Motor neuron (in vitro differentiated cells): ENCODE measurements at regions of chr7 and their contacts with region 1.

Region 1: DNA sequence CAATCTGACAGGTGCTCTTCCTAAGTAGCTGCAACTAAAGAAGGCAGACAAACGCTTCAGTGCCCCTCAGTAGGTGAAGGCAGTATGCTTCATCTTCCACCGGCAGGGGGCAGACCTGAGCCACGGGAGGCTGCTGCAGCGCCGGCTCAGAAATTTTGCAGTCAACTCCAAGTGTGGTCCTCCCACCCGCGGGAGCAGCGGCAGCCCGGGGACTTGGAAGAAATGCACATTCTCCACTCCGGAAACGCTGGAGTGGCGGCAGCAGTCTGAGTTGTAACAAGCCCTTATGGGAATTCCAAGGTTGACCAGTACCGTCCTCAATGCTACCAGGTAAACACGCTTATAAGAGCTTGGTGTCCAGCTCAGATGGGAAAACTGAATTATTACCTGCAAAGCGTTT is 3.4 kb downstream of the IGFBP3 start:
- ATAC-seq: peak in 4 of 8 experiments; percentile 13 to 72 (median 40)
- H3K4me3 ChIP-seq: no peak overlapping the region
- H3K27ac ChIP-seq: no peak overlapping the region
- H3K4me1 ChIP-seq: no peaks in the 10 kb centered on the region

Region 2: DNA sequence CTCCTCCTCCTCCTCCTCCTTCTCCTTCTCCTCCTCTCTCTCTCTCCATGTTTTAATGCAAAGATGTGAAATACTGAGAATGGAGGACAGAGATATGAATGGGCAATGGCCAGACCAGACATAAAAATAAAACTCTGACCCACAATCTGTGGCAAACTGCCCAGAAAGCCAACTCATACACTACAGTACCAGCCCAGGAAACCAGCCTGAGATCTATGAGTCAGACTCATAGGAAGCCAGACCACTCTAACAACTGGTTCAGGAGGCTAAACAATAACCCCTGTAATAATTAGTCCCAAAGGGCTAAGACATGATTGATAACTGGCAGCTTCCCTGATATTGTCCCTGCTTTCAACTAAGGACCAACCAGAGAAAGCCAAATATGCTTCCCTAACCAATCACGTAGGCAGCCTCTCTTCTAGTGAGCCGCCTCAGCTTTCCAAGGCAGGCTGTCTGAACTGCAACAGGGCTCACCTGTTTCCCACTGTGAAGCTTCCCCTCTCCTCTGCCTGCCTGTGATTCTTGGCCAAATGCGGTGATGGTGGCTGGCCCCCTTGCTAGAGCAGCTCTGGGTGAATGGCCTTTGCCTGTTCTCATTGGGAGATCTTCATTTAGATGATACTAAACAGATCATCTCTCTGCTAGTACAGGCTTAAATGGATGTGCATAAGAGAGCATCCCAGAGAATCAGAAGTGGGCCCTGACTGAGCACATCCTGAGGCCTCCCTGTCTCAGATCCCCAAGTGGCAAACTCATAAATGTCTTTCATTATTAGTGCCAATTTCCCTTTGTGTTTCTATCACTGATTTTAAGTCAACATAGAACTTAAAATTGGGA is 846.7 kb after region 1 on chr7:
- in situ Hi-C with region 1: loop called in 1 of 9 experiments (anchors 25 kb)
- ATAC-seq: peak in 7 of 8 experiments; percentile 46 to 93 (median 66)
- H3K4me3 ChIP-seq: no peak overlapping the region
- H3K27ac ChIP-seq: no peak overlapping the region
- H3K4me1 ChIP-seq: no peaks in the 10 kb centered on the region

Region 3: DNA sequence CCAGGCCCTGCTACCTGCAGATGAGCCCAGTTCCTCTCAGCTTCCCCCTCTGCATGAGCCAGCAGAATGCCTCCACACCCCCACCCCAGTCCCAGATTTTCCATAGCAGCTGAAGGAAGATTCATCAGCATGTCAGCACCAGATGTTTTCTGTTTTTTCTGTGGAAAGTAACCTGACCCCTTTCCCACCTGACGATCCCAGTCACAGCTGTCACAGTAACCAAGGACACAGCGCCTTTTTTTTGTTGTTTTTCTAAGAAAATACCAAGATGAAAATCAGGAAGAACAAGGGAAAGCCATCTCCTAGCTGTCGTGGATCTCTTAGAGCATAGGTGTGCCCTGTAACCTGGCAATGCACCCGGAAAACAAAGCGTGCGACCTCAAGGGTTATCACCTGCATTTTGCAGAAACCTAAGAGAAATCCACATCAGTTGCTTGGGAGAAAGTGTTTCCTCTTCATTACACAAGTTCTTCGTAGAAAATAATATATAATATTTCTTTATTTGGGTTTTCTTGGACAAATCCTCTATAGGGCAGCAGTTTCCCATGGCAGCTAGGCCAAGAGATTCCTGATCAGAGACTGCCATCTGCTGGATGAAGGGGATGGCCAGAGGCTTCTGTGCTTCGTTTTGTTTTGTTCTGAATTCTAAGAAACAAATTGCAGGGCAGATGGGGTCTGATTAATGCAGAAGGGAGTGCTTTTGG is 1262.3 kb after region 1 on chr7:
- in situ Hi-C with region 1: loop called in 5 of 9 experiments (anchors 25 kb)
- ATAC-seq: peak; percentile 78 to 95 (median 86)
- H3K4me3 ChIP-seq: no peak overlapping the region
- H3K27ac ChIP-seq: no peak overlapping the region
- H3K4me1 ChIP-seq: peaks cover 5 to 7% of the 10 kb centered on the region in 2 donors